Activated CD4-positive, alpha-beta memory T cell treated with anti-CD3 and anti-CD28 coated beads for 36 hours (primary cell): ENCODE measurements at regions of chr14 and their contacts with region 1.

Region 1: GRCh38 chr14:52729925-52730667 is at the start of gene STYX:
- DNase-seq: peak; percentile 99
- H3K4me3 Mint-ChIP-seq: peak within 1 kb of the TSS; percentile 87
- H3K27ac Mint-ChIP-seq: peak within 1 kb of the TSS; percentile 82
- H3K4me1 Mint-ChIP-seq: peaks cover 29% of the 10 kb centered on the region
- H3K27me3 Mint-ChIP-seq: no peaks in the 10 kb centered on the region
- total RNA-seq, gene STYX: 15.9 to 17.0 TPM

Region 2: GRCh38 chr14:52695481-52696091 is 34.5 kb before region 1 on chr14 and contains the start of gene ERO1A:
- CTCF ChIA-PET with region 1: no interaction called
- POLR2A ChIA-PET with region 1: interaction called, 8 read pairs
- intact Hi-C with region 1: loop called (anchors 1 kb)
- DNase-seq: peak; percentile 80
- H3K4me3 Mint-ChIP-seq: peak within 1 kb of the TSS; percentile 100
- H3K27ac Mint-ChIP-seq: peak within 1 kb of the TSS; percentile 99
- H3K4me1 Mint-ChIP-seq: peaks cover 35% of the 10 kb centered on the region
- H3K27me3 Mint-ChIP-seq: no peaks in the 10 kb centered on the region
- total RNA-seq, gene ERO1A: 138 to 153 TPM

Region 3: GRCh38 chr14:52741865-52742264 is 11.8 kb after region 1 on chr14:
- CTCF ChIA-PET with region 1: interaction called, 3 read pairs
- POLR2A ChIA-PET with region 1: interaction called, 10 read pairs
- intact Hi-C with region 1: loop called (anchors 1 kb)
- DNase-seq: no peak
- H3K4me3 Mint-ChIP-seq: peak overlapping the region; percentile 73
- H3K27ac Mint-ChIP-seq: peak overlapping the region; percentile 98
- H3K4me1 Mint-ChIP-seq: peaks cover 68% of the 10 kb centered on the region
- H3K27me3 Mint-ChIP-seq: no peaks in the 10 kb centered on the region

Region 4: GRCh38 chr14:52791203-52792096 is 61.4 kb after region 1 on chr14 and contains the start of gene GNPNAT1:
- CTCF ChIA-PET with region 1: no interaction called
- POLR2A ChIA-PET with region 1: no interaction called
- intact Hi-C with region 1: loop called (anchors 1 kb)
- DNase-seq: peak; percentile 88
- H3K4me3 Mint-ChIP-seq: peak within 1 kb of the TSS; percentile 94
- H3K27ac Mint-ChIP-seq: peak within 1 kb of the TSS; percentile 54
- H3K4me1 Mint-ChIP-seq: peaks cover 41% of the 10 kb centered on the region
- H3K27me3 Mint-ChIP-seq: no peaks in the 10 kb centered on the region
- total RNA-seq, gene GNPNAT1: 30.4 to 31.4 TPM

Region 5: DNA sequence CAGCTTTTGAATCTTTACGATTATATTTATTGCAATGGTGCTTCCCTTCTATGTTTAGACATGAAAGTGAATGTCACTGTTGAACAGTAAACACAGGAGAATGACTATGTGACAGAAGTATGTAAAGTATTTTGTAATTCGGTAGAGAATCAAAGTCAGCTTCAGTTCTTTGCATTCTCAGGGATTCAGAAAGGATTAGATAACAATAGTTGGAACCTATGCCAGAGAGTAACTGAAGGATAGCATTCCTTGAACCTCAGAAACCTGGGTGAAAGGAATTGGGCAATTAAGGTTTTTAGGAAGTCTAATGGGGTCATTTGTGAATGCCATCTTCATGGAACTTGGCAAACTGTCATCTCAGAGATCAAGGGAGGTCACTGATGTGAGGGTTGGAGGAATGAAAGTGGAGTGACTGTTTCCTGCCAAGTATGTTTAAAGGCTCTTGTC is 728.3 kb after region 1 on chr14:
- CTCF ChIA-PET with region 1: no interaction called
- POLR2A ChIA-PET with region 1: no interaction called
- intact Hi-C with region 1: no loop called
- DNase-seq: no peak
- H3K4me3 Mint-ChIP-seq: no peak overlapping the region
- H3K27ac Mint-ChIP-seq: no peak overlapping the region
- H3K4me1 Mint-ChIP-seq: no peaks in the 10 kb centered on the region
- H3K27me3 Mint-ChIP-seq: no peaks in the 10 kb centered on the region